ENCODE measurements at regions of chr14 and their contacts with region 1.

Region 1: DNA sequence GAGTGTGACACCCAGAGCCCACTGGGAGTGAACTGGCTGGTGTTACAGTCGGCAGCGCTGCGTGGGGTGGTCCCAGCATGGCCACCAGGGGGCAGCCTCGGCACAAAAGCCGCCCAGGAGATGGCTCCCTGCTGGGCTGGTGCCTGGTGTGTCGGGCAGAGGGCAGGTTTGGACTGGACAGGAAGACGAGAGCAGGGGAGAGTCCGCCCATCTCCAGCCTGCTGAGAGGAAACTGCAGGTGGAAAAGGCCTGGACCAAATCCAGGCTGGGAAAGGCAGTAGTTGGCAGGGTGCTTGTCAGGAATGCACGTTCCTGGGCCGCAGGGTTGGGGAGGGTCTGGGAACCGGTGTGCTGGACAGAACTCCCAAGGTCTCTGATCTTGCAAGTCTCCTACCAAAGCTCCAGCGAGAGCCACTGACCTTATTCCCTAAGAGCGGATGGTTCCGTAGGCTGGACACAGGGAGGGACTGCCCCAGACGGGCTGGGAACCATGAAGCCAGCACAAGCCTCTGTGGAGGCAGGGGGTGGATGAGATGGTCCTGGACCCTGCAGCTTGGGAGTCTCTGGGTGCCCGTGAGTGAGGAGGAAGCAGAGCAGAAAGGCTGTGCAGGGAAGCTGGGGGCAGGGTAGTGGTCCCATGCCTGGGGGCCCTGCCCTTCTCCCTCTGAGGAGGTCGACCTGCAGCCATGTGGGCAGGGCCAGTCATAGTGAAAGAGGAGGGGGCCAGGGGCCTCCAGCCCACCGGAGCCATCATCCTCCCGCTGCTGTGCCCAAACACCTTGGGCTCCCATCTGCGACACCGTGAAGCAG is 1.8 kb downstream of the AHNAK2 start:
- DNase-seq: peak; percentile 80 to 87 (median 82)
- H3K4me3 ChIP-seq: no peak overlapping the region
- H3K4me3 Mint-ChIP-seq: peak overlapping the region; percentile 35 to 88 (median 64)
- H3K27ac ChIP-seq: no peak overlapping the region
- H3K27ac Mint-ChIP-seq: peak overlapping the region in 5 of 7 donors; percentile 19 to 66 (median 56)
- H3K4me1 ChIP-seq: peaks cover 17% of the 10 kb centered on the region
- H3K4me1 Mint-ChIP-seq: peaks cover 4 to 26% (median 13%) of the 10 kb centered on the region in 4 donors
- H3K27me3 ChIP-seq: peaks cover 13% of the 10 kb centered on the region
- H3K27me3 Mint-ChIP-seq: peaks cover 8 to 18% of the 10 kb centered on the region in 2 donors

Region 2: DNA sequence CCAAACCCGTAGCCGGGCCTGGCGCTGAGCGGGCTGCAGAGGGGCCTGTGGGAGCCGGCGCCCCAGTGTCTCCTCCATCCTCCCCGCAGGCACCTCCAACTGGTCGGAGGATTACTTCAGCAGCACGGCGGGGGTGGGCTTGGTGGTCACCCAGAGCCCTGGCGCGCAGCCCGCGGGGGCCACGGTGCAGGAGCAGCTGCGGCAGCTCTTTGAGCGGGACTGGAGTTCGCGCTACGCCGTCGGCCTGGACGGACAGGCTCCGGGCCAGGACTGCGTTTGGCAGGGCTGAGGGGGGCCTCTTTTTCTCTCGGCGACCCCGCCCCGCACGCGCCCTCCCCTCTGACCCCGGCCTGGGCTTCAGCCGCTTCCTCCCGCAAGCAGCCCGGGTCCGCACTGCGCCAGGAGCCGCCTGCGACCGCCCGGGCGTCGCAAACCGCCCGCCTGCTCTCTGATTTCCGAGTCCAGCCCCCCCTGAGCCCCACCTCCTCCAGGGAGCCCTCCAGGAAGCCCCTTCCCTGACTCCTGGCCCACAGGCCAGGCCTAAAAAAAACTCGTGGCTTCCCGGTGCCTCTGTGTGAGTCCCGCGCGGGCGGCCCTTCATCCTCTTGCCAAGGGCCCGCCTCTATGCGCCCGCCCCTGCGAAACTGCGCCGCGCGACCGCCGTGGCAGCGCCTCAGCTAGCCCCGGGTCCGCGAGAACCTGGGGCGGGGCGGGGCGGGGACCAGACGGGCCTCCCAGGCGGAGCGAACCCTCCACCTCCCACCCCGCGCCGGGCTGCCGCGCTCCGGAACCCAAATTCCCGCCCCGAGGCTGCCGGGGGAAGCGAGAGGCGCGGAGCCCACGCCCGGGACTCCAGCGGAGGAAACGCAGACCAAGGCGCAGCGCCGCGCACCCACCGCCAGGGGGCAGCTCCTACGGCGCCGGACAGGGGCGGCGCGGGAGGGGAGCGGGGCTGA is 43.4 kb before region 1 on chr14:
- CTCF ChIA-PET with region 1: interaction called, 4 read pairs
- POLR2A ChIA-PET with region 1: no interaction called
- intact Hi-C with region 1: loop called (anchors 2 kb)
- DNase-seq: peak; percentile 74 to 85 (median 80)
- H3K4me3 ChIP-seq: peak overlapping the region in 1 of 2 donors; percentile 28
- H3K4me3 Mint-ChIP-seq: peak overlapping the region in 7 of 8 donors; percentile 17 to 73 (median 62)
- H3K27ac ChIP-seq: no peak overlapping the region
- H3K27ac Mint-ChIP-seq: no peak overlapping the region
- H3K4me1 ChIP-seq: no peaks in the 10 kb centered on the region
- H3K4me1 Mint-ChIP-seq: peaks cover 2 to 9% (median 3%) of the 10 kb centered on the region in 4 donors
- H3K27me3 ChIP-seq: no peaks in the 10 kb centered on the region
- H3K27me3 Mint-ChIP-seq: peaks cover 6 to 11% of the 10 kb centered on the region in 2 donors

Region 3: DNA sequence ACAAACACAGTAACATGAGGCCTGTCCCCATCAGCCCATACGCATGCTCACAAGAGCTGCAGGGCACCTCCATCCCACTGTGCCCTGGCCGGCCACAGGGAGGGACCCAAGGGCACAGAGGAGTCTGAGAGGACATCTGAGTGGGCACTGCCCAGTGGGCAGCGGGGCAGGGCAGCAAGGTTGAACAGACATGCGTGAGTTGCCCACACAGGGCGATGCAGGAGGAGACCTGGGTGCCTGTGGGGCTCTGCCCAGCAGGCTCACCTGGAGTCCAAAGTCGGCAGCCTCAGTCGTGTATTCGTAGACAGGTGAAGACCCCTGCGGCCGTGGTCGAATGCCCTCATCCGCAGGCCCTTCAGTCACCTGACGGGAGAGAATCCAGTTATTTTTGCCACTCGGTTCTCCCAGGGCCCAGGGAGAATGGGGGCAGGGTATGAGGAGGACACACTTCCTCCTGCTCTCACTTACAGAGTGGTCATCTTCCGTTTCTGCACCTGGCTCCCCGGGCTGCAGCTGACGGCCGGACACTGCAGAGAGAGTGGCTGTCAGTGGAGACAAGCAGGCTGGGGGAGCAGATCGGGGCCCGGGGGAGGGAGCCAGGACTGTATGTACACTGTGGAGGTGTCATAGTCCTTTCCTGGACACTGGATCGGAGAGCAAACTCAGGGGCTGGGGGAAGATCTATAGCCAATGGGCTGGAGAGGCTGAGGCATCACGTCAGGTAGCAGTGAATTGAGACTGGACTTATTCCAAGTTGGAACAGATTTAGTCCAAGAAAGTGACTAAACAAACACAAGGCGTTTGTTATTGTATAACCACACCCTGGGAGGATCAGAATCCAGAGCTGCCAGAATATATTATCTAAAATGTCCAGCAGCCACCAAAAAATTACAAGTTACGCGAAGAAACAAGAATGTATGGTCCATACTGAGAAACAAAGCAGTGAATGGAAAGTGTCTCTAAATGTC is 19.0 kb before region 1 on chr14:
- CTCF ChIA-PET with region 1: no interaction called
- POLR2A ChIA-PET with region 1: no interaction called
- intact Hi-C with region 1: no loop called
- DNase-seq: no peak
- H3K4me3 ChIP-seq: no peak overlapping the region
- H3K4me3 Mint-ChIP-seq: no peak overlapping the region
- H3K27ac ChIP-seq: no peak overlapping the region
- H3K27ac Mint-ChIP-seq: peak overlapping the region in 1 of 7 donors; percentile 7
- H3K4me1 ChIP-seq: no peaks in the 10 kb centered on the region
- H3K4me1 Mint-ChIP-seq: no peaks in the 10 kb centered on the region
- H3K27me3 ChIP-seq: no peaks in the 10 kb centered on the region
- H3K27me3 Mint-ChIP-seq: peaks cover 18 to 19% of the 10 kb centered on the region in 2 donors

Region 4: DNA sequence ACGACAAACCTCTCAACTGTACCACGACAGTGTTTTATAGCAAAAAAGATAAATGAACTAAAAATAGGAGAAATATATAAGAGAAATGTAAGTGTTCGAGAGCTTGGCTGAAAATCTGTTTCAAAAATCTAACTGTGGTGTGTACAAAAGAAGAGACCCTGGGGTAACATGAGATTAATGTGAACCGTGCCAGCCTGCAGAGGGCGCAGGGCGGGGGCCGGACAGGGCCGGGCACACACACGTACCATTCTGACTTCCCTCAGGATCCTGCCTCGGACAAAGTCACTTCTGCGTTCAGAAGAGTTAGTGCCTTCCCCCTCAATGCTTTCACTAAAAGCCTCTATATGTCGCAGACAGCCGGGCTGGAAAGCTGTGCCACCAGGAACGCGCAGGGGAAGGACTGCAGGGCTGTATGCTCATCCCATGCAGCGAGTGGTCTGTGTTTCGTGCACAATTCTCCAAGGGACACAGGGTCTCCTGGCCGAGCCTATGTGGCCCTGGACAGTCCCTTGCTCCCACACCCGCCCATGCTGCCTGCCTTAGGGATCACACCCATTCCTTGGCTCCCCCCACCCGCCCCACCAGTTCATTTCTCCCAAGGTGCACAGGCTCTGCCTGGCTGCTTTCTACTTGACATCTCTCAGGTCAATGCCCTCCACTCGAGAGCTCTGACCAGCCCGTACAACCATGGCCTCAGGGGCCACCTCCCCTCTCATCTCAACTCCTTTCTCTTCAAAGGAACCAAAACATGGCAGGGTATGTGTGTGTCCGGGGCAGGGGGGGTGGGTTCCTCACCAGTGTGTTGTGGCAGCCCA is 36.0 kb after region 1 on chr14:
- CTCF ChIA-PET with region 1: interaction called, 3 read pairs
- POLR2A ChIA-PET with region 1: no interaction called
- intact Hi-C with region 1: loop called (anchors 5 kb)
- DNase-seq: no peak
- H3K4me3 ChIP-seq: no peak overlapping the region
- H3K4me3 Mint-ChIP-seq: no peak overlapping the region
- H3K27ac ChIP-seq: no peak overlapping the region
- H3K27ac Mint-ChIP-seq: peak overlapping the region in 6 of 7 donors; percentile 23 to 70 (median 41)
- H3K4me1 ChIP-seq: peaks cover 51% of the 10 kb centered on the region
- H3K4me1 Mint-ChIP-seq: peaks cover 44 to 56% (median 50%) of the 10 kb centered on the region in 4 donors
- H3K27me3 ChIP-seq: no peaks in the 10 kb centered on the region
- H3K27me3 Mint-ChIP-seq: no peaks in the 10 kb centered on the region

Region 5: GRCh38 chr14:105051182-105052109 is 75.0 kb after region 1 on chr14:
- CTCF ChIA-PET with region 1: interaction called, 162 read pairs
- POLR2A ChIA-PET with region 1: interaction called, 15 read pairs
- intact Hi-C with region 1: no loop called
- DNase-seq: no peak
- H3K4me3 ChIP-seq: no peak overlapping the region
- H3K4me3 Mint-ChIP-seq: no peak overlapping the region
- H3K27ac ChIP-seq: no peak overlapping the region
- H3K27ac Mint-ChIP-seq: peak overlapping the region in 2 of 7 donors; percentile 31 to 62
- H3K4me1 ChIP-seq: no peaks in the 10 kb centered on the region
- H3K4me1 Mint-ChIP-seq: peaks cover 4 to 7% (median 6%) of the 10 kb centered on the region in 4 donors
- H3K27me3 ChIP-seq: no peaks in the 10 kb centered on the region
- H3K27me3 Mint-ChIP-seq: no peaks in the 10 kb centered on the region